ENCODE measurements at regions of chr1 and their contacts with region 1.

Region 1: DNA sequence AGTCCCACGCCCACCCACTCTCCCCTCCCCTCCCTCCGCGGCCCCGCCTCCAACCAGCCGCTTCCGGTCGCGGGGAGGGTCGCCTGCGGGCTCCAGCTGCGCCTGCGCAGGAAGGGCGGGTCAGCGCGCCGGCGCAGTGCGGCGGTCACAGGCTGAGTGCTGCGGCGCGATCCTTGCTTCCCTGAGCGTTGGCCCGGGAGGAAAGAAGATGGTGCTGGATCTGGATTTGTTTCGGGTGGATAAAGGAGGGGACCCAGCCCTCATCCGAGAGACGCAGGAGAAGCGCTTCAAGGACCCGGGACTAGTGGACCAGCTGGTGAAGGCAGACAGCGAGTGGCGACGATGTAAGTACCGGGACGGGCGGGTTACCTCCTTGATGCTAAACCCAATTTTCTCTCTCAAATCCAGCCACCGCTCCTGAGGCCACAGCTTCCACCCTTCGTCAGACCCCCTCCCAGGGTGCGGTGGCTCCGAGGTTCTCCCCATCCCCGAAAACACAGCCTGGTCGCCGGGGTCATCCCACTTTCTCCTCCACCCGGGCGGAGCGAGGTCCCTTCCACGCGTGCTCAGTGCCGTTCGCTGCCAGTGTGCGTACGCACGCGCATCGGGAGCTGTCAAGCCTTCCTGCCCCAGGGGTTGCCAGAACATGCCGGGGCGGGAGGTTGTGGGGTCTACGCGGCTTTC is at the start of gene SARS1:
- DNase-seq: peak; percentile 77 to 96 (median 91)
- ATAC-seq: peak; percentile 91
- H3K4me3 ChIP-seq: peak within 1 kb of the TSS; percentile 97
- H3K4me3 Mint-ChIP-seq: peak within 1 kb of the TSS; percentile 94 to 100 (median 98)
- H3K27ac ChIP-seq: peak within 1 kb of the TSS; percentile 85
- H3K27ac Mint-ChIP-seq: peak within 1 kb of the TSS; percentile 85 to 98 (median 97)
- H3K4me1 ChIP-seq: peaks cover 22 to 27% of the 10 kb centered on the region in 2 donors
- H3K4me1 Mint-ChIP-seq: peaks cover 33 to 47% (median 42%) of the 10 kb centered on the region in 7 donors
- H3K27me3 ChIP-seq: no peaks in the 10 kb centered on the region
- H3K27me3 Mint-ChIP-seq: peaks cover 0 to 4% (median 0%) of the 10 kb centered on the region in 5 donors
- total RNA-seq, gene SARS1: 110 to 173 (median 135) TPM

Region 2: DNA sequence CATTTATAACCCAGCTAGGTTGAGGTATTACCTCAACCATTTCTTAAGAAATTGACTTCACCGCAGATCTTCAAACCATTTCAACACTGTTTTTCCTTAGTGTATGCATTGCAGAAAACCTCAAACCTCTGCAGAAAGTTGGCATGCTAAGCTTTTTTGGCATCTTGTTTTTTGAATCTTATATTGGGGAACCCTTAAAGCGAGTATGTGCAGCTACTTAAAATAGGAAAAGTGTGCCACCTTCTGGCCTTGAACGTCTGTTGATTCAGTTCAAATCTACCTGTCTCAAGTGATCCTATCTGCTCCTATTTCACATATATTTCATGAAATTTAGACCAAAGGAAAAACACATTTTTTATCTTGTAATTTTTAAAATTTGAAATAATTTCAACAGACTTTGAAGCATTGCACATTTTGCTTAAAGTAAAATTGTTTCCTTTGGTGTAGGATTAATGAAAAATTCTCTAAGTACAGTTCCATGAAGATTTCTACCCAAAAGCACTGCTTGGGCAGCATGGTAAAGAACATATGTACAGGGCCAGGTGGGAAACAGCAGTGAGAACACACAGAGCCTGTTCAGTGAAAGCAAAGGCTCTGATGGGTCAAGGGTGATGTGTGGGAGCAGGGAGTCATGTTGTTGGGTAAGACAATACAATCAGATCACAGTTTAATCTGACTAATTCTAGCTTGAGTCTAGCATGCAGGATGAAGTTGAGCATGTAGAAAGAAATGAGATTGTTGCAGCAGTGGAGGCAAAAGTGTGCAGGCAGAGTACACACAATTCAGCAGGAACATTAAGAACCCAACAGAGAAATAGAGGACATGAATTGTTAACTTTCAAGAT is 570.2 kb before region 1 on chr1:
- CTCF ChIA-PET with region 1: no interaction called
- POLR2A ChIA-PET with region 1: interaction called, 3 read pairs
- intact Hi-C with region 1: loop called in 1 of 2 experiments (anchors 10 kb)
- DNase-seq: peak in 7 of 9 donors; percentile 59 to 78 (median 67)
- ATAC-seq: peak; percentile 45
- H3K4me3 ChIP-seq: no peak overlapping the region
- H3K4me3 Mint-ChIP-seq: peak overlapping the region in 9 of 10 donors; percentile 4 to 70 (median 47)
- H3K27ac ChIP-seq: peak overlapping the region; percentile 71
- H3K27ac Mint-ChIP-seq: peak overlapping the region; percentile 68 to 100 (median 98)
- H3K4me1 ChIP-seq: peaks cover 49 to 52% of the 10 kb centered on the region in 2 donors
- H3K4me1 Mint-ChIP-seq: peaks cover 55 to 81% (median 75%) of the 10 kb centered on the region in 7 donors
- H3K27me3 ChIP-seq: no peaks in the 10 kb centered on the region
- H3K27me3 Mint-ChIP-seq: no peaks in the 10 kb centered on the region

Region 3: DNA sequence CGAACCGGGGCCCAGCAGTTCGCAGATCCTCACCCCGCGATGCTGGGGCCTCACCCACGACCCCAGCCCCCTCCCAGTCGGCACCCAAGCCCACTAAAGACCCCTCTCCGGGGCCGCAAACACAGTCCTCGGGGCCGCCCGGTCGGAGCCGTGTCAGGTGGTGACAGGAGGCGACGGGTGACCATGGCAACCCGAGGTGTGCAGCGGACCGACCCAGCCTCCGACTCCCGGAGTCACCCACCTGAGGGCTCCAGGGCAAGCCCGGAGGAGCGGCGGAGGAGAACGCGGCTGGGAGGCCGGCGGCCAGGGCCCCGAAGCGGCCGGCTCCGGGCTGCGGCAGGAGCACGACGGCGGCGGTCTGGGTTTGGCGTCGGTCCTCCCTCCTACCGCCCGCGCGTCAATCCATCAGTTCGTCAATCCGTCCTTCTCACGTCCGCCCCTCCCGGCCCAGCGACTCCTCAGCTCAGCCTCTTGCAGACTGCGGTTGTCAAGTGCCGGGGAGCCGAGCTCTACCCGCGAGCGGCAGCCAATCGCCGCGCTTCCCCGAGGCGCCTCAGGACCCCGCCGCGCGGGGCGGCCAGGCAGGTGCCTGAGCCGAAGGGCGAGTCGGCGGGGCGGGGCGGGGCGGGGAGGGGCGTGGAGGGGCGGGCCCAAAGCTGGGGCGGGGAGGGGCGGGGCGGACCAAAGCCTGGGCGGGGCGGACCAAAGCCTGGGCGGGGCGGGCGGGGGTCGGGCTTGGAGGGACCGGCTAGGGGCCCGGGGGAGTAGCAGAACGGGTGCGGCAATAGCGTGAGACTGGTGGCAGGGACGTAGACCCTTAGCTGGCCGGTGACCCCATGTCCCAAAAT is 172.1 kb before region 1 on chr1 and contains the start of gene WDR47:
- CTCF ChIA-PET with region 1: no interaction called
- POLR2A ChIA-PET with region 1: no interaction called
- intact Hi-C with region 1: loop called (anchors 2 to 5 kb)
- DNase-seq: peak; percentile 95 to 97 (median 96)
- ATAC-seq: peak; percentile 99
- H3K4me3 ChIP-seq: peak within 1 kb of the TSS; percentile 97
- H3K4me3 Mint-ChIP-seq: peak within 1 kb of the TSS; percentile 86 to 97 (median 94)
- H3K27ac ChIP-seq: peak within 1 kb of the TSS; percentile 90
- H3K27ac Mint-ChIP-seq: peak within 1 kb of the TSS; percentile 78 to 97 (median 91)
- H3K4me1 ChIP-seq: peaks cover 0 to 7% of the 10 kb centered on the region in 2 donors
- H3K4me1 Mint-ChIP-seq: peaks cover 7 to 25% (median 16%) of the 10 kb centered on the region in 7 donors
- H3K27me3 ChIP-seq: no peaks in the 10 kb centered on the region
- H3K27me3 Mint-ChIP-seq: peaks cover 0 to 7% (median 0%) of the 10 kb centered on the region in 5 donors
- total RNA-seq, gene WDR47: 9.8 to 15.4 (median 14.4) TPM

Region 4: DNA sequence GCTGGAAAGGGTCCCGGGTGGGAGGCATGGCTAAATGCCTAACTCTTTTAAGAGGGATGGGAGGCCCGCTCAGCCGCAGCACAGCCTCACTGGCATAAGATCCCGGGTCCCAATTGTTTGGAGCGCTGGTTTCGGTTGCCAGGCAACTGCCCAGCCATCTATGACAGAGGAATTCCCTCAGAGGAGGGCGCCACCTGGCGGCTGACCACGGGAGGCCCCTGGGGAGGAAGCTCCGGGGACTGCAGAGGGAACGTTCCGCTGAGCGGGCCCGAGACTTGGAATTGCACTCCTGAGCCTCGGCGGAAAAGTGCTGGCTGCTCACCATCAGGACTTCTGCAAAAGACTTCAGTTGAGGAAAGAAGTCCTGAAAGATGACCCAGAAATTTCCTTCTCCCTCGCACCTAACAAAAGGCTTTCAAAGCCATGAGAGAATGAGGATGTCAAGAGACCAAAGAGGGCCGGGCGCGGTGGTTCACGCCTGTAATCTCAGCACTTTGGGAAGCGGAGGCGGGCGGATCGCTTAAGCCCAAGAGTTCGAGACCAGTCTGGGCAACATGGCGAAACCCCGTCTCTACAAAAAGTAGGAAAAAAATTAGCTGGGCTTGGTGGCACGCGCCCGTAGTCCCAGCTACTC is 101.2 kb before region 1 on chr1:
- CTCF ChIA-PET with region 1: no interaction called
- POLR2A ChIA-PET with region 1: interaction called, 3 read pairs
- intact Hi-C with region 1: loop called (anchors 1 kb)
- DNase-seq: peak; percentile 75 to 93 (median 85)
- ATAC-seq: peak; percentile 75
- H3K4me3 ChIP-seq: peak overlapping the region; percentile 68
- H3K4me3 Mint-ChIP-seq: peak overlapping the region; percentile 78 to 93 (median 88)
- H3K27ac ChIP-seq: peak overlapping the region; percentile 68
- H3K27ac Mint-ChIP-seq: peak overlapping the region; percentile 84 to 96 (median 92)
- H3K4me1 ChIP-seq: peaks cover 16 to 21% of the 10 kb centered on the region in 2 donors
- H3K4me1 Mint-ChIP-seq: peaks cover 23 to 40% (median 28%) of the 10 kb centered on the region in 7 donors
- H3K27me3 ChIP-seq: no peaks in the 10 kb centered on the region
- H3K27me3 Mint-ChIP-seq: peaks cover 0 to 41% (median 0%) of the 10 kb centered on the region in 5 donors

Region 5: DNA sequence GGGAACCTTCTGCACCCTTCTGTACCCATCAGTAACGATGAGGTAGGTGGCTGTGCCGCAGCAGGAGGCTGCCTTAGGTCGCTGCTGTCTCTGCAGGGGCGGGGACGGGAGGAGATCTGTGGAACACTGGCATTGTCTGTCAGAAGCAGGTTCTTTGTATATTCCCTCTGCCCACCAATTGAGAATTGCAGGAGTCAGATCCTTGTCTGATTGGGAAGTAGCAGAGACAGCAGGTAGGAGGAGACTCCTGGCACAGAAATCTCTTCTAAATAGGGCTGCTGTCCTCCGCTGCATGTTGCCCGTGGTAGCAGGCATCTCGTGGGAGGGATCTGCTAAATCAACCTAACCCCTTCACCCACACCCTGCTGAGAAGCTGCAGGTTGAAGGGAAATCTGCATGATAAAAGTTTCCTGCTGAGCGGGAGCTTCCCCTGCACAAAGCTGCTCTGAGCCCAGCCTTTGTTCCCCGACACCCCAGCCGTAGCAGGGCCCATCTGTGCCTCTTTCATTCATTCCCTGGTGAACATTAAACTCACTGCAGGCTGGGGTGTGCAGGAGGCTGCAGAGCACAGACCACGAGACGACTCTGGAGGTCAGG is 15.7 kb after region 1 on chr1:
- CTCF ChIA-PET with region 1: no interaction called
- POLR2A ChIA-PET with region 1: interaction called, 5 read pairs
- intact Hi-C with region 1: loop called in 1 of 2 experiments (anchors 2 kb)
- DNase-seq: no peak
- ATAC-seq: no peak
- H3K4me3 ChIP-seq: no peak overlapping the region
- H3K4me3 Mint-ChIP-seq: no peak overlapping the region
- H3K27ac ChIP-seq: no peak overlapping the region
- H3K27ac Mint-ChIP-seq: peak overlapping the region in 1 of 9 donors; percentile 2
- H3K4me1 ChIP-seq: no peaks in the 10 kb centered on the region
- H3K4me1 Mint-ChIP-seq: peaks cover 6 to 21% (median 19%) of the 10 kb centered on the region in 7 donors
- H3K27me3 ChIP-seq: no peaks in the 10 kb centered on the region
- H3K27me3 Mint-ChIP-seq: no peaks in the 10 kb centered on the region

Region 6: GRCh38 chr1:109397538-109398342 is 183.8 kb after region 1 on chr1 and contains the start of gene SORT1:
- CTCF ChIA-PET with region 1: no interaction called
- POLR2A ChIA-PET with region 1: no interaction called
- intact Hi-C with region 1: loop called in 1 of 2 experiments (anchors 5 kb)
- DNase-seq: peak; percentile 29 to 67 (median 43)
- ATAC-seq: peak; percentile 94
- H3K4me3 ChIP-seq: peak within 1 kb of the TSS; percentile 37
- H3K4me3 Mint-ChIP-seq: peak within 1 kb of the TSS; percentile 80 to 90 (median 86)
- H3K27ac ChIP-seq: no peak within 1 kb of the TSS
- H3K27ac Mint-ChIP-seq: peak within 1 kb of the TSS in 2 of 9 donors; percentile 43 to 74
- H3K4me1 ChIP-seq: peaks cover 0 to 6% of the 10 kb centered on the region in 2 donors
- H3K4me1 Mint-ChIP-seq: peaks cover 0 to 30% (median 16%) of the 10 kb centered on the region in 7 donors
- H3K27me3 ChIP-seq: peaks cover 0 to 18% of the 10 kb centered on the region in 2 donors
- H3K27me3 Mint-ChIP-seq: peaks cover 36 to 51% (median 41%) of the 10 kb centered on the region in 5 donors
- total RNA-seq, gene SORT1: 1.0 to 25.6 (median 1.8) TPM

Region 7: DNA sequence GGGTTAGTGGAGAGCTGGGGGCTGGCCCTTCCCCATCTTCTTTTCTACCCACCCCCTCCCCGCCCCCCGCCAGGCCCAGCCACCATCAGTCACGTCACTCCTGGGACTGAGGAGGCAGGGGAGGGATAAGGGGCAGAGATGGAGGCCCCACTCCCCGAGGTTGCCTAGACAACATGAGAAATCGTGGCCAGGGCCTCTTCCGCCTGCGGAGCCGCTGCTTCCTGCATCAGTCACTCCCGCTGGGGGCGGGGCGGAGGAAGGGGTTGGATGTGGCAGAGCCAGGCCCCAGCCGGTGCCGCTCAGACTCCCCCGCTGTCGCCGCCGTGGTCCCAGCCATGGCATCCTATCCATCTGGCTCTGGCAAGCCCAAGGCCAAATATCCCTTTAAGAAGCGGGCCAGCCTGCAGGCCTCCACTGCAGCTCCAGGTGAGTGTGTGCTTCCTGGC is 406.9 kb after region 1 on chr1:
- CTCF ChIA-PET with region 1: no interaction called
- POLR2A ChIA-PET with region 1: no interaction called
- intact Hi-C with region 1: loop called in 1 of 2 experiments (anchors 2 kb)
- DNase-seq: peak; percentile 92 to 98 (median 95)
- ATAC-seq: peak; percentile 90
- H3K4me3 ChIP-seq: peak overlapping the region; percentile 78
- H3K4me3 Mint-ChIP-seq: peak overlapping the region; percentile 90 to 98 (median 94)
- H3K27ac ChIP-seq: peak overlapping the region; percentile 90
- H3K27ac Mint-ChIP-seq: peak overlapping the region; percentile 92 to 98 (median 96)
- H3K4me1 ChIP-seq: peaks cover 14 to 43% of the 10 kb centered on the region in 2 donors
- H3K4me1 Mint-ChIP-seq: peaks cover 52 to 79% (median 68%) of the 10 kb centered on the region in 7 donors
- H3K27me3 ChIP-seq: no peaks in the 10 kb centered on the region
- H3K27me3 Mint-ChIP-seq: no peaks in the 10 kb centered on the region

Measured in naive thymus-derived CD4-positive, alpha-beta T cell (primary cell).